ENCODE measurements at regions of chr4 and their contacts with region 1.

Region 1: GRCh38 chr4:158496030-158496741 is 25.5 kb upstream of the RXFP1 start:
- DNase-seq: peak; percentile 25 to 88
- H3K4me3 ChIP-seq: no peak overlapping the region
- H3K27ac ChIP-seq: no peak overlapping the region
- H3K4me1 ChIP-seq: no peaks in the 10 kb centered on the region
- H3K27me3 ChIP-seq: no peaks in the 10 kb centered on the region
- CTCF ChIP-seq: peak; percentile 49 to 83 (median 73)
- EP300 ChIP-seq: no peak
- POLR2A ChIP-seq: no peak
- RAD21 ChIP-seq: peak; percentile 76

Region 2: DNA sequence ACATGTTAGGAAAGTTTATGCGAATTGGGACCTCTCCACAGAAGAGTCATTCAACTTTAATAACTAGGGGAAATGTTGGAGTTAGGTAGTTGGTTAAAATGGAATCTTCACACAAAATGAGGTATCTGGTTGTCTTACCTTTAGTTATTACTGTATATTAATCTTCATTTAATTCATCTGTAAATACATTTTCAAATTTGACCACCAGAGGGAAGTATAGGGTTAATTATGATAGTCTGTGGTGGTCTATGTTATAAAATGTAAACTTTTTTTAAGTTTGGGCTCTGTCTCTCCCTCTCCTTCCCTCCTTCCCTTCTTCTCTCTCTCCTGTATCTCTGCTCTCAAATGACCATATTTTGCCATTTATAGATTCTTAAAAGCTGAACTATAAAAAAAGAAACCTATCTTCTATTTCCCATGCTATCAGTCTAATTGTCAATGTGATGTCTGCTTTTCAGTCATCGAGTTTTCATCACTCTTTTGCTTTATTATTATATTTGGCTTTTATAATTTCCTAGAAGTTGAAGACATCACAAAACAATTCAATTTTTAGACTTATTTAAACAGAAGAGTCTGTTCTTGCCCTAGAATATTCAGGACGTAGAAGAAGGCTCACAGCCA is 236.1 kb before region 1 on chr4:
- CTCF ChIA-PET with region 1: interaction called, 10 read pairs
- POLR2A ChIA-PET with region 1: no interaction called
- DNase-seq: no peak
- H3K4me3 ChIP-seq: no peak overlapping the region
- H3K27ac ChIP-seq: no peak overlapping the region
- H3K4me1 ChIP-seq: peaks cover 0 to 9% (median 3%) of the 10 kb centered on the region in 4 experiments; a peak in 2 of 7 replicates
- H3K27me3 ChIP-seq: no peaks in the 10 kb centered on the region
- CTCF ChIP-seq: peak in 2 of 3 experiments; percentile 20 to 28; a peak in 2 of 4 replicates
- EP300 ChIP-seq: no peak
- POLR2A ChIP-seq: no peak
- RAD21 ChIP-seq: peak; percentile 54 to 65

Region 3: DNA sequence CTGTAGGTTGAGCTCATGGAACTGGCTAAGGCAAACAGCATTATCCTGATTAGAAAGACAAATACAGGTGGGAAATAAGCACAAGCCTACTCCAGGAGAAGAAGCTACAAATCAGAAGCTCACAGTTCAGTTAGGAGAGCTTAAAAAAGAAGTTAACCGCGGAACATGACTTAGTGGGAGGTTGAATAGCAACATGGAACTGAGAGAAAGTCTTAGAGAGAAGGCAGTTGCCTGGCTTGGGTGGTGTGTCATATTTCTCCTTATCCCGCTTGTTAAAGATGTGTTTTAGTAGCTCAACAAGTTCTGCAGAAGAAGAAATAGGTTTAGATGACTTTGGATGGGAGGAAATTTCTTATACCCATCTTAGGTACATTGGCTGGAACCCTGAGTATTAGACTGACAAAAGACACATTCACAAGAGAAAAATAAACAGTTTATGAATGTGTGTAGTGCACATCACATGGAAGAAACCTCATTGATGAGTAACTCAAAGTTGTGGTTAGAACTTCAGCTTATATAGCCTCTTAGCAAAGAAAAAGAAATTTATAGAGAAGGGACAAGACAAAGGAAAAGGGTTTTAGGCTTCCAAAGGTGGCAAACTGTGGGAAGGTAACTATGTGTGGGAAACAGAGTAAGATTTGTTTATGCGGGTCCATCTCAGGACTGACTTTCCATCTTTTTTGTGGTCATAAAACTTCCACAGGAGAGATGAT is 11.9 kb before region 1 on chr4:
- CTCF ChIA-PET with region 1: interaction called, 24 read pairs
- POLR2A ChIA-PET with region 1: no interaction called
- DNase-seq: no peak
- H3K4me3 ChIP-seq: no peak overlapping the region
- H3K27ac ChIP-seq: no peak overlapping the region
- H3K4me1 ChIP-seq: no peaks in the 10 kb centered on the region
- H3K27me3 ChIP-seq: no peaks in the 10 kb centered on the region
- CTCF ChIP-seq: no peak
- EP300 ChIP-seq: no peak
- POLR2A ChIP-seq: no peak
- RAD21 ChIP-seq: no peak

Region 4: GRCh38 chr4:158513256-158513655 is 17.1 kb after region 1 on chr4:
- CTCF ChIA-PET with region 1: interaction called, 14 read pairs
- POLR2A ChIA-PET with region 1: no interaction called
- DNase-seq: no peak
- H3K4me3 ChIP-seq: no peak overlapping the region
- H3K27ac ChIP-seq: no peak overlapping the region
- H3K4me1 ChIP-seq: no peaks in the 10 kb centered on the region
- H3K27me3 ChIP-seq: no peaks in the 10 kb centered on the region
- CTCF ChIP-seq: no peak
- EP300 ChIP-seq: no peak
- POLR2A ChIP-seq: no peak
- RAD21 ChIP-seq: no peak

Region 5: GRCh38 chr4:158578476-158578875 is 82.3 kb after region 1 on chr4:
- CTCF ChIA-PET with region 1: interaction called, 14 read pairs
- POLR2A ChIA-PET with region 1: no interaction called
- DNase-seq: no peak
- H3K4me3 ChIP-seq: no peak overlapping the region
- H3K27ac ChIP-seq: no peak overlapping the region
- H3K4me1 ChIP-seq: peaks cover 2 to 8% (median 3%) of the 10 kb centered on the region in 4 experiments; a peak in 5 of 7 replicates
- H3K27me3 ChIP-seq: no peaks in the 10 kb centered on the region
- CTCF ChIP-seq: peak in 2 of 3 experiments; percentile 13 to 47; a peak in 2 of 4 replicates
- EP300 ChIP-seq: no peak
- POLR2A ChIP-seq: no peak
- RAD21 ChIP-seq: peak; percentile 43 to 57